ENCODE measurements at regions of chr5 and their contacts with region 1.

Region 1: DNA sequence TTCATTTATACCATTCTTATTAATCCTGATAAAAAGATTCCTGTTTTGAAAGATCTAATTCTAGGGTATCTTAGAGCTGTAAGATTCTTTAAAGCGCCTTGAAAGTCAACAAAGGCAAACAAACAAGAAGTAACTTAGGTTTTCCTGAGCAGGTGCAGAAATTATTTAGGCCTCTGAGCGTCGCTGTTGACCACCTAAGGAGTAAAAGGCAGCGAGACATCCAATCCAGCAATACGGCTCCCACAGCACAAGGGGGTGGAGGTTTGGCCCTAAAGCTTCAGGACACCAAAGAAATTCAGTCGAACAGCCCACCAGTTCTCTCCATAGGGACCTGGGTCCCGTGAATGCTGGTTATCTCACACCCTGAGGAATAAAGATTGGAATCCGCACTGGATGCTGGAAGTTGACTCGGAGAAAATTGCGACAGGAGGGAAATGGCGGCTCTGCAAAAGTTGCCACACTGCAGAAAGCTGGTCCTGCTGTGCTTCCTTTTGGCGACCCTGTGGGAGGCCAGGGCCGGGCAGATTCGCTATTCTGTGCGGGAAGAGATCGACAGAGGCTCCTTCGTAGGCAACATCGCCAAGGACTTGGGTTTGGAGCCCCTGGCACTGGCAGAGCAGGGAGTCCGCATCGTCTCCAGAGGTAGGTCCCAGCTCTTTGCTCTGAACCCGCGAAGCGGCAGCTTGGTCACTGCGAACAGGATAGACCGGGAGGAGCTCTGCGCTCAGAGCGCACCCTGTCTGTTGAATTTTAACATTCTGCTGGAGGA is at the start of gene PCDHGA2:
- DNase-seq: peak; percentile 24 to 74
- ATAC-seq: peak; percentile 54 to 87; a peak in 4 of 6 replicates
- H3K4me3 ChIP-seq: peak within 1 kb of the TSS; percentile 45
- H3K27ac ChIP-seq: peak within 1 kb of the TSS; percentile 59 to 70
- H3K4me1 ChIP-seq: no peaks in the 10 kb centered on the region
- CTCF ChIP-seq: peak; percentile 35; the same call in 2 of the 3 replicates
- EP300 ChIP-seq: no peak
- POLR2A ChIP-seq: no peak
- RAD21 ChIP-seq: peak; percentile 46 to 53; a peak in 4 of 5 replicates
- polyA plus RNA-seq, gene PCDHGA2: 1.6 and 1.7 TPM in 2 replicates

Region 2: DNA sequence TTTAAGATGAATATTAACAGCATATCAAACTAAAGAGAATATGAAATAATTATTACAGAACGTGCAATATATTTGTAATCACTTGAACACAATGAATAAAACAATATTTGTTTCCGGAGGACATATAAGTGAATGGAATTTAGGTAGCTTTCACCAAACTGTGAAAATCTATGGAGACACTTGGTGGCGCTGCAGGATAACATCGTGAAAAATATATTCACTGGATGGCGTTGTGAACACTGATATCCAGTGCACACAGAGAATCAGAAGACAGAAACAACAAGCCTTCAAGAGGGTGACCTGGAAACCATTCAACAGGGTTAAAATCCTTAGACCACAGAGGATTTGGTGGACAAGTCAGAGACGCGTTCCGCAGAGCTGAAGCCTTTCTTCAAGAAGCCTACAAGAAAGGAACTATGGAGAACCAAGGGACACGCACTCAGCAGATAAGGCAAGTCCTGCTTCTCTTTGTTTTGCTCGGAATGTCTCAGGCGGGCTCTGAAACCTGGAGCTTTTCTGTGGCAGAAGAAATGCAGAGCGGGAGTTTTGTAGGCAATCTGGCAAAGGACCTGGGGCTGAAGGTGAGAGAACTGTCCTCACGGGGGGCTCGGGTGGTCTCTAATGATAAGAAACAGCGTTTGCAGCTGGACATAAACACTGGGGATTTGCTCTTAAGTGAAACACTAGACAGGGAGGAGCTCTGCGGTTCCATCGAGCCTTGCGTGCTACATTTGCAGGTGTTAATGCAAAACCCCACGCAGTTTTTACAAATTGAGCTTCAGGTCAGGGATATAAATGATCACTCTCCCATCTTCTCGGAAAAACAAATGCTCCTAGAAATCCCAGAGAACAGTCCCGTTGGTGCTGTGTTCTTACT is 139.1 kb before region 1 on chr5 and contains the start of gene PCDHB11:
- CTCF ChIA-PET with region 1: no interaction called
- POLR2A ChIA-PET with region 1: no interaction called
- DNase-seq: peak; percentile 6 to 39
- ATAC-seq: peak; percentile 68 to 78; a peak in 5 of 6 replicates
- H3K4me3 ChIP-seq: peak within 1 kb of the TSS; percentile 30; the same call in 2 of the 3 replicates
- H3K27ac ChIP-seq: no peak within 1 kb of the TSS
- H3K4me1 ChIP-seq: no peaks in the 10 kb centered on the region
- CTCF ChIP-seq: peak; percentile 38
- EP300 ChIP-seq: no peak
- POLR2A ChIP-seq: no peak
- RAD21 ChIP-seq: peak; percentile 31 to 46; a peak in 4 of 5 replicates
- polyA plus RNA-seq, gene PCDHB11: 0.21 and 0.22 TPM in 2 replicates

Region 3: DNA sequence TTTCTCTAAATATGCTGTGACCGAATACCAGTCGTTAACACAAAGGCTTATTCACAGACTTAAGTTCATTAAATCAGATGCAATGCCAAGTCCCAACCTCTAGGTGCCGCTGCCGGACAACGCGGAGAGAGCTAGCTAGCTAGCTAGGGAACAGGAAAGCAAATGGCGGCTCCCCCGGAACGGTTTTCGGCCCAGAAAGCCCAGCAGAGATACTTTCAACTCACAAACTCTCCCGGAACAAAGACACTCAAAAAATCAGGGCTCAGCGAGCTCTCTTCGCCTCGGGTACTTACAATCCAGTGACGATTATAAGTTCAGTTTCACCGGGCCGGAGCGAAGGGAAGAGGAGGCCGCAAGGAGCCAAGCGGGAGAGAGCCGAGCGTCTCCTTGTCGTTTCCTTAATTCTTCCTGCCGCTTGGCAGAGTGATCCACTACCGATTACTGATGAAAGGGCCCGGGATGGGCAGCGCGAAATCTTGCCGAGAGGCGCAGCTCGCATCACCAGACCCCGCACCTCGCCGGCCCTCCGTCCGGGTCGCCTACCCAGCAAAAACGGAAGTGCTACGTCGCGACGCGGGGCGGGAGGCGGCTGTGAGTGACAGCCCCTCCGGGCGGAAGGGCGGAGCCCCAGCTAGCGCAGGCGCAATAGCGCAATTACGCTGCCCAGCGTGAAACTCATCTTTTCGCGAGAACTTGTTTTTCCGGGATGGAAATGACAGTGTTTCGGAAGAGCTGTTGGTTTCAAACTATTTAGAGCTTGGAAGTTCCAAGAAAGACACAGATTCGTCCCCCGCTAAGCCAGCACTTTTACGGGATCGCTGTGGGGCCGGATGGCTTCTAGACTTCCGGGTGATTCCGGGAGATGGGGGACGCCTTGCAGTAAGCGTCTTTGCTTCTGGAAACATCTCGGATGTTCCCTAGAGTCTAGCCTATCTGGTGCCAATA is 18.2 kb before region 1 on chr5 and contains the start of gene TAF7:
- CTCF ChIA-PET with region 1: interaction called, 16 read pairs
- POLR2A ChIA-PET with region 1: interaction called, 15 read pairs
- DNase-seq: peak; percentile 75 to 96
- ATAC-seq: peak; percentile 97 to 98
- H3K4me3 ChIP-seq: peak within 1 kb of the TSS; percentile 68
- H3K27ac ChIP-seq: peak within 1 kb of the TSS; percentile 84 to 93
- H3K4me1 ChIP-seq: no peaks in the 10 kb centered on the region
- CTCF ChIP-seq: peak; percentile 78
- EP300 ChIP-seq: no peak
- POLR2A ChIP-seq: peak; percentile 79
- RAD21 ChIP-seq: no peak; a peak in 1 of 5 replicates
- polyA plus RNA-seq, gene TAF7: 78.1 and 90.6 TPM in 2 replicates

Region 4: GRCh38 chr5:141326088-141326854 is 12.5 kb before region 1 on chr5:
- CTCF ChIA-PET with region 1: interaction called, 22 read pairs
- POLR2A ChIA-PET with region 1: interaction called, 15 read pairs
- DNase-seq: peak in 1 of 2 experiments; percentile 51
- ATAC-seq: peak in 1 of 2 experiments; percentile 75; a peak in 3 of 6 replicates
- H3K4me3 ChIP-seq: 0 out of 3 replicates have a peak overlapping the region, but pooled peaks have one; percentile 14
- H3K27ac ChIP-seq: no peak overlapping the region
- H3K4me1 ChIP-seq: no peaks in the 10 kb centered on the region
- CTCF ChIP-seq: peak; percentile 9; the same call in 1 of the 3 replicates
- EP300 ChIP-seq: no peak
- POLR2A ChIP-seq: no peak
- RAD21 ChIP-seq: 0 out of 5 replicates have a peak, but pooled peaks of 1 of the 2 experiments have one; percentile 25

Region 5: DNA sequence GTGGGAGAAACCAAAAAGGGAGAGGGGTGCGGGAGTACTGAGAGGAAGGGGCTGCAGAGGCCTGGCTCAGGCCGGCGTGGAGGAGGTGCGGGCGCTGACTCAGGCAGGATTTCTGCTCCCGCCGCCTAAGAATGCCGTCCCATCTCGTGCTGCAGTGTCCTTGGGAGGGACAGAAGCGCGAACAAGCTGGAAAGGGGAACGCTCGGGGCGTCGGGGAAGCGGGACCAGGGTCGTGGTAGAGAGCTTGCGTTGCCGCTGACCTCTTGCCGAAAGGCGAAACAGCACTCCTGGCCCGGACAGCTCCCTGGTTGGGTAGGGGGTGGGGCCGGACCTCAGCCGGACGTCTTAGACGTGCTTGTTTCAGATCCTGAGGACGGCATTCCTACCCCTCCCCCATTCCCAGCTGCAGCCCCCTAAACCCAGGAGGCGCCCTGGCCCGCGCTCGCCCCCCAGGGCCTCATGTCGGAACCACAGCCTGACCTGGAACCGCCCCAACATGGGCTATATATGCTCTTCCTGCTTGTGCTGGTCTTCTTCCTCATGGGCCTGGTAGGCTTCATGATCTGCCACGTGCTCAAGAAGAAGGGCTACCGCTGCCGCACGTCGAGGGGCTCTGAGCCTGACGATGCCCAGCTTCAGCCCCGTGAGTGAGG is 299.2 kb after region 1 on chr5:
- CTCF ChIA-PET with region 1: no interaction called
- POLR2A ChIA-PET with region 1: no interaction called
- DNase-seq: peak in 1 of 2 experiments; percentile 25
- ATAC-seq: peak; percentile 9 to 38; a peak in 3 of 6 replicates
- H3K4me3 ChIP-seq: peak overlapping the region; percentile 83
- H3K27ac ChIP-seq: peak overlapping the region; percentile 63 to 92; a peak in 5 of 6 replicates
- H3K4me1 ChIP-seq: peaks cover 27% of the 10 kb centered on the region
- CTCF ChIP-seq: no peak
- EP300 ChIP-seq: no peak
- POLR2A ChIP-seq: no peak
- RAD21 ChIP-seq: no peak

Measured in A549 (cell line).